A549 (cell line): ENCODE measurements at regions of chr3 and their contacts with region 1.

Region 1: GRCh38 chr3:10983219-10983916 is 9.2 kb upstream of the SLC6A1 start:
- DNase-seq: peak; percentile 37 to 87
- ATAC-seq: peak; percentile 83 to 94
- H3K4me3 ChIP-seq: no peak overlapping the region
- H3K27ac ChIP-seq: no peak overlapping the region
- H3K4me1 ChIP-seq: peaks cover 4% of the 10 kb centered on the region; the same call in 2 of the 3 replicates
- CTCF ChIP-seq: peak; percentile 74
- EP300 ChIP-seq: no peak
- POLR2A ChIP-seq: no peak
- RAD21 ChIP-seq: peak; percentile 35 to 50; a peak in 4 of 5 replicates

Region 2: DNA sequence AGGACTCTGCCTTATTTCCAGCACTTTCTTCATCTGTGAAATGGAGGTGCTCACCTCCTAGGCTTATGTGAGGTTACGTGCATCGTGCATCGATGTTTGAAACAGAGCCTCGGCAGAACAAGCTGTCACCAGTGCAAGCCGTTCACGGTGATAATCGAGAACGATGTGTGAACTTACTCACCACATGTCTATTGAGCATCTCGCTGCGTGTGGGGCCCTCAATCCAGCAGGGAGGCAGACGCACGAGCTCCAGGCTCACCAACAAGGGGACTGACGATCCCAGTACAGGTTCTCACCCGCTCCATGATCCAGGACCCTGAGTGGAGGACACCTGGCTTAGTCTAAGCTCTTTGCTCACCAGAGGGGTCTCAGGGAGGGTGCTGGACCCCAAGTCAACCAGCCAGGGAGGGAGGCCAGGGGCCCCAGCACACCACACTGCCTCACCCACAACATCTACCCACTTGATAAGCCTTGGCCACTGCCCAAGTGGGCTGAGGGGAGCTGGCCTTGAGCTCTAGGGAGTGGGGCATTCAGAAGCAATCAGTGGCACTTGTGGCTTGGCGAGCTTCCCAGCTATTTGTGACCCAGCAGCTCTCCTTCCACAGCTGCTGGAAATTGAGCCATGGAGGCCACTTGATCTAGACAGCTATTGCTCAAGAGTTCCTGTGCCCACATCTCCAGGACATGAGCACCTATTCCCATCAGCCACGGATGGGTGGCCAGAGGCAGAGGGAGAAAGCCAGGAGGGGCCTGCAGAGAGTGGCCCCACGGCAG is 25.2 kb before region 1 on chr3:
- CTCF ChIA-PET with region 1: interaction called, 46 read pairs
- POLR2A ChIA-PET with region 1: no interaction called
- DNase-seq: no peak
- ATAC-seq: no peak
- H3K4me3 ChIP-seq: no peak overlapping the region
- H3K27ac ChIP-seq: no peak overlapping the region
- H3K4me1 ChIP-seq: no peaks in the 10 kb centered on the region
- CTCF ChIP-seq: no peak
- EP300 ChIP-seq: no peak
- POLR2A ChIP-seq: no peak
- RAD21 ChIP-seq: no peak

Region 3: GRCh38 chr3:10964537-10965167 is 18.7 kb before region 1 on chr3:
- CTCF ChIA-PET with region 1: interaction called, 46 read pairs
- POLR2A ChIA-PET with region 1: no interaction called
- DNase-seq: no peak
- ATAC-seq: peak in 1 of 2 experiments; percentile 64; a peak in 3 of 6 replicates
- H3K4me3 ChIP-seq: no peak overlapping the region
- H3K27ac ChIP-seq: no peak overlapping the region
- H3K4me1 ChIP-seq: no peaks in the 10 kb centered on the region
- CTCF ChIP-seq: no peak
- EP300 ChIP-seq: no peak
- POLR2A ChIP-seq: no peak
- RAD21 ChIP-seq: no peak

Region 4: DNA sequence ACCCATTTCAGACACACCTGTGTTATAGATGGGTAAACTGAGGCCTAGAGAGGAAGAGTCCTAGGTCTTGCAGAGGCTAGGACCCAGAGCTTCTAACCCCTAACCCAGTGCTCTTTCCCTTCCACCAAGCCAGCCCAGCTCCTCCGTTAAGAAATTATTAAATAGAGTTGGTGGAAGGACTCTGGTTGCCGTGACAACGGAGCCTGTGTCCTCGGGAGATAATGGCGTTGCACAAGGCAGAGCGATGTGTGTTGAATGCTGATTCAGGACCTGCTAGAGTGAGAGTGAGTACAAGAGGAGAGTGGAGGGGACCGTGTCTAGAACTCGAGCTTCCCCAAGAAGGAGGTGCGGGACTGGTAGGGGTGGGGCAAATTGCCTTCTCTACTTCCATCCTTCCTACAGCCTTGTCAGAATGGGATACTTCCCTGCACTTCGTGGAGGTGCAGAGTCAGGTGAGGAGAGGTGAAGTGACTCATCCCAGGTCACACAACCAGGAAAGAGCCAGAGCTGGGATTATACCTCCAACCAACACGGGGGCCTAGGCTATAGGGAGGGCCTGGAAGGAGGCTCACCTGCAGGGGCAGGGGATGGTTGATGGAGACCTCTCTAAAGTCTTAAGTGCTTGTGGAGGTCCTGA is 17.8 kb after region 1 on chr3:
- CTCF ChIA-PET with region 1: interaction called, 21 read pairs
- POLR2A ChIA-PET with region 1: no interaction called
- DNase-seq: peak in 1 of 2 experiments; percentile 14
- ATAC-seq: peak in 1 of 2 experiments; percentile 20; a peak in 2 of 6 replicates
- H3K4me3 ChIP-seq: no peak overlapping the region
- H3K27ac ChIP-seq: no peak overlapping the region
- H3K4me1 ChIP-seq: peaks cover 24% of the 10 kb centered on the region
- CTCF ChIP-seq: no peak
- EP300 ChIP-seq: no peak
- POLR2A ChIP-seq: no peak
- RAD21 ChIP-seq: no peak

Region 5: DNA sequence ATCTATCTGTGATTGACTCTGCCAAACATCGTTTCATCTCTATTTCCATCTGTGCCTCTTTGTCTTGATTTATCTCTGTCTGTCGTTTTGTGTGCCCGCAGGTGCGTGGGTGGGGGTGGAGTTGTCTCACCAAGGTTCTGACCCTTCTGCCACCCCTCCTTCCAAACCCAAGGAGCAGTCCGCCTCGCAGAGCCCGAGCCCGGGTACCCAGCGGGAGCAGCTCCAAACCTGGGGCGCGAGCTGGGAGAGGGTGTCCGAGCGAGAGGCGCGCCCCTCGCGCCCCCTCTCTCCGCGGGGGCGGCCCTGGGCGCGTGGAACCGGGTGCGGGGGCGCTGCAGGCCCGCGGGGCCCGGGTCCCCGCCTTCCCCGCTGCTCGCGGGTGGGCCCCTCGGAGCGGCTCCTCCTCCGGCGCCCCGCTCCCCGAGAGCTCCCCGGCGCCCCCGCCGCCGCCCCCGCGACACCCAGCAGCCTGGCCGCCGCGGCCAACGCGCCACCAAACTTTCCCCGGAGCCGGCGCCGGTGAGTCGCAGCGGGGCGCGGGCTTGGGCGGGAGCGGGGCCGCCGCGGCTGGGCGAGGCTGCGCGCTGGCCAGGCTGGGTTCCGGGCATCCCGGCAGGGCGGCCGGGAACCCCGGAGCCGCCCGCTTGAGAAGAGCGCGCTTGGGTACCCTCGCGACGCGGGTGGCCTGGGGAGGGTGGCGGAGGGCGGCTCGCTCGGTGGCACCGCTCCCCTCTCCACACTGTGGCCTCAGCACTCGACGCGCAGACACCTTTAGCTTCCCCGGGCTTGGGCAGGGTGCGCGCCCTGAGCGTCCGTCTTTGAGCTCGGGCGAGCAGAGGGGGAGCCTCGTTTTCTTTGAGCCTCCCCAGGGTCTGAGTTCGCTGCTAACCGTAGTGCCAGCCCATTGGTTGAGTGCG is 170.9 kb after region 1 on chr3 and contains the start of gene HRH1:
- CTCF ChIA-PET with region 1: no interaction called
- POLR2A ChIA-PET with region 1: no interaction called
- DNase-seq: peak in 1 of 2 experiments; percentile 31
- ATAC-seq: peak; percentile 62 to 73
- H3K4me3 ChIP-seq: peak within 1 kb of the TSS; percentile 56
- H3K27ac ChIP-seq: peak within 1 kb of the TSS; percentile 66 to 83
- H3K4me1 ChIP-seq: no peaks in the 10 kb centered on the region
- CTCF ChIP-seq: no peak; the same call in 2 of the 3 replicates
- EP300 ChIP-seq: no peak
- POLR2A ChIP-seq: no peak
- RAD21 ChIP-seq: no peak
- polyA plus RNA-seq, gene HRH1: 4.2 and 4.7 TPM in 2 replicates

Region 6: GRCh38 chr3:11430624-11431023 is 447.3 kb after region 1 on chr3:
- CTCF ChIA-PET with region 1: no interaction called
- POLR2A ChIA-PET with region 1: no interaction called
- DNase-seq: no peak
- ATAC-seq: no peak
- H3K4me3 ChIP-seq: no peak overlapping the region
- H3K27ac ChIP-seq: no peak overlapping the region
- H3K4me1 ChIP-seq: no peaks in the 10 kb centered on the region
- CTCF ChIP-seq: no peak
- EP300 ChIP-seq: no peak
- POLR2A ChIP-seq: no peak
- RAD21 ChIP-seq: no peak